ENCODE measurements at regions of chr1 and their contacts with region 1.

Region 1: DNA sequence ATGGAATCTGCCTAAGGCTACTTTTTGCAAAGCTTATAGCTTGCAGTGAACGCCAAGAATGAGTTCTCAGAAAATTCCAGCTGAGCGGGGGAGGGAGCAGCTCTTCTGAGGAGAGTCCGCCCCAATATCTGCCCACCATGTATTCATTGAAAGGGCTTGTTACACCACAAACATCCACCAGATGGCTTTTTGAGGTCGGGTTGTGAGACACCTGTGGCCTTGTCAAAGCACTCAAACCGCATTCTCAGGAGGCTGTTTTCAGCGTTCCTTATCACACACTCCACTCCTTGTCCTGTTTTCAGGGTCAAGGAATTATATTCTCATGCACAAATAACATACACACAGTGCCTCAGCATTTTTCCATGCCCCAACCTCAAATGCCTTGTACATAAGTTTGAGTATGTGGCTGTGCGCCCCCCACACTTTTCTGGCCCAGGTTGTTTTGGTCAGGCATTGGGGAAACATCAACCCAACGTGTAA is 3.9 kb upstream of the C4BPB start:
- DNase-seq: peak; percentile 82
- ATAC-seq: peak; percentile 84
- H3K4me3 ChIP-seq: no peak overlapping the region
- H3K4me3 Mint-ChIP-seq: no peak overlapping the region
- H3K27ac ChIP-seq: no peak overlapping the region
- H3K27ac Mint-ChIP-seq: no peak overlapping the region
- H3K4me1 ChIP-seq: peaks cover 14 to 15% of the 10 kb centered on the region in 2 donors
- H3K4me1 Mint-ChIP-seq: peaks cover 13% of the 10 kb centered on the region
- H3K27me3 ChIP-seq: no peaks in the 10 kb centered on the region
- H3K27me3 Mint-ChIP-seq: no peaks in the 10 kb centered on the region
- CTCF ChIP-seq: peak; percentile 77

Region 2: DNA sequence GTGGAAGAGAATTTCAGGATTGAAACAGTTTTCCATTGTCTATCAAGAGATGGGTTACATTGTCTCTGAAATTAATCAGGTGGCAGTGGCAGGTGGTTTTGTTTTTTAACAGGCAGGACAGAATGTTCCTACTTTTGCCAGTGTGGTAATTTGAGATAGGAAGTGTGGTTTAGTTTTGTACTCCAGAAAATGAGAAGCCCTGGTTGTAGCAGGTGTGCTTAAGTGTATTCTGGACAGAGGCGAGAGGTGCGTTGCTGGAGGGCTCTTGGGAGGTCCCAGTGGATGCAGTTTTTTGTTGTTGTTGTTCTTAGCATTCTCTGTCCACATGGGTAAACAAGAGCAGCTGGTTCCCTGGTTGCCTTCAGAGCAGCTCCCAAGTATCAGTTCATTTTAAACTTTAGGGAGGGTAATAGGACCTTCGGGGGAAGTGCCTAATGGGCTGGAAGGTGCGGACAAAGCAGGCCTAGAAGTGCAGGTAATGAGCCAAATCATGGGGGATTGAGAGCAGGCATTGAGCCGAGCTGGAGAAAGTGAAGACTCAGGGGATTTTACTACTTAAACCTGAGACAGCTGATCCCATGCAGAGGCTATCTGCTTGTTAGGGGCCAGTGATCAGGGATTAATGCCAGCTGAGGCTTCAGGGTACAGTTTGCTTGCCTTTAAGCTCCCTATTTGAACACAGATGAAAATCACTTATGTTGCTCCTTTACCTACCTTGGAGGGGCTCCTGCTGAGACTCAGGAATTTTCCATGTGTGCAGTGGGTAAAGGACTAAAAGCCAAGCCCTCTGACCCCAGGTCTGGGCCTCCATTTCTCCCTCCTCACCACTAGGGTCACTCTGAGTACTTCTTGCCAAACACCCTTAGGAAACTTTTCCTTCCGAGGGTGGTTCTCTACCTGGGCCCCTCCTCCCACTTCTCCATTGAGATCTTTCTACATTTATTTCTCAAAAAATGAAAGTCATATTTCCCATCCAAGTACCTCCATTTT is 25.6 kb before region 1 on chr1:
- CTCF ChIA-PET with region 1: interaction called, 25 read pairs
- POLR2A ChIA-PET with region 1: interaction called, 3 read pairs
- intact Hi-C with region 1: no loop called
- DNase-seq: no peak
- ATAC-seq: no peak
- H3K4me3 ChIP-seq: no peak overlapping the region
- H3K4me3 Mint-ChIP-seq: no peak overlapping the region
- H3K27ac ChIP-seq: no peak overlapping the region
- H3K27ac Mint-ChIP-seq: peak overlapping the region; percentile 59
- H3K4me1 ChIP-seq: peaks cover 12 to 17% of the 10 kb centered on the region in 2 donors
- H3K4me1 Mint-ChIP-seq: peaks cover 13% of the 10 kb centered on the region
- H3K27me3 ChIP-seq: no peaks in the 10 kb centered on the region
- H3K27me3 Mint-ChIP-seq: no peaks in the 10 kb centered on the region
- CTCF ChIP-seq: no peak

Region 3: DNA sequence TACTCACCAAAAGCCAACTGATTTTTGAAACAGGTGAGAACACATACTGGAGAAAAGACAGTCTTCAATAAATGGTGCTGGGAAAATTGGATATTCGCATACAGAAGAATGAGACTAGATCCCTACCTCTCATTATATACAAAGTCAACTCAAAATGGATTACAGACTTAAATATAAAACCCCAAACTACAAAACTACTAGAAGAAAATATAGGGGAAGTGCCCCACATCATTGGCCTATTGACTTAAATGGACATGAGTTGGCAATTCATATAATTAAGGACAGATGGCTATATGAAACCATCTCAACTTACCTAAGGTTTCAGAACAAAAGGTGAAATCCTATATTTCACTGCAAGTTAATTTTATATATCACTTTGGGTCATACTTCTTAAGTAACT is 79.3 kb after region 1 on chr1:
- CTCF ChIA-PET with region 1: no interaction called
- POLR2A ChIA-PET with region 1: no interaction called
- intact Hi-C with region 1: no loop called
- DNase-seq: no peak
- ATAC-seq: no peak
- H3K4me3 ChIP-seq: no peak overlapping the region
- H3K4me3 Mint-ChIP-seq: no peak overlapping the region
- H3K27ac ChIP-seq: no peak overlapping the region
- H3K27ac Mint-ChIP-seq: no peak overlapping the region
- H3K4me1 ChIP-seq: no peaks in the 10 kb centered on the region
- H3K4me1 Mint-ChIP-seq: no peaks in the 10 kb centered on the region
- H3K27me3 ChIP-seq: peaks cover 0 to 4% (median 0%) of the 10 kb centered on the region in 4 experiments
- H3K27me3 Mint-ChIP-seq: peaks cover 2% of the 10 kb centered on the region
- CTCF ChIP-seq: no peak

Region 4: DNA sequence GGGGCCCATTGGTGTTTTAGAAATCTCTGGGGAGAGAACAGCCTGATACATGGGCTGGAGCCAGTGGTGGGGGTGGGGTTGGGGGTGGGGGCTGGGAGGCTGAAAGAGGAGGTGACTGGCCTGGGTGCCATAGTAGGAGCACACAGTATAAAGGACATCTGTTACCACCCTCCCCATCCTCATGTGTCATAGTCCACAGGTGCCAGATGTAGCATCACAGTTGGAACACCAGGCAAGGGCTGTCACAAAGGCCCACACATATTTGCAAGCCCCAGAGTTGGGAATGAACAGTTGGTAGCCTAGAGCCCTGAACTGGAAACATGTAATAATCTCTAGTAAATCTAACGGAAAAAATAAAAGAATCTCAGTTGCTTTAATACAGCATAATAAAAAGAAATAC is 314.2 kb after region 1 on chr1:
- CTCF ChIA-PET with region 1: interaction called, 183 read pairs
- POLR2A ChIA-PET with region 1: no interaction called
- intact Hi-C with region 1: no loop called
- DNase-seq: no peak
- ATAC-seq: no peak
- H3K4me3 ChIP-seq: no peak overlapping the region
- H3K4me3 Mint-ChIP-seq: no peak overlapping the region
- H3K27ac ChIP-seq: no peak overlapping the region
- H3K27ac Mint-ChIP-seq: no peak overlapping the region
- H3K4me1 ChIP-seq: no peaks in the 10 kb centered on the region
- H3K4me1 Mint-ChIP-seq: peaks cover 7% of the 10 kb centered on the region
- H3K27me3 ChIP-seq: no peaks in the 10 kb centered on the region
- H3K27me3 Mint-ChIP-seq: no peaks in the 10 kb centered on the region
- CTCF ChIP-seq: no peak